Activated CD8-positive, alpha-beta memory T cell treated with anti-CD3 and anti-CD28 coated beads, Interleukin-2, amount 10 ng/mL, durations not matched to agents 7 days and 5 days (primary cell): ENCODE measurements at regions of chr3 and their contacts with region 1.

Region 1: DNA sequence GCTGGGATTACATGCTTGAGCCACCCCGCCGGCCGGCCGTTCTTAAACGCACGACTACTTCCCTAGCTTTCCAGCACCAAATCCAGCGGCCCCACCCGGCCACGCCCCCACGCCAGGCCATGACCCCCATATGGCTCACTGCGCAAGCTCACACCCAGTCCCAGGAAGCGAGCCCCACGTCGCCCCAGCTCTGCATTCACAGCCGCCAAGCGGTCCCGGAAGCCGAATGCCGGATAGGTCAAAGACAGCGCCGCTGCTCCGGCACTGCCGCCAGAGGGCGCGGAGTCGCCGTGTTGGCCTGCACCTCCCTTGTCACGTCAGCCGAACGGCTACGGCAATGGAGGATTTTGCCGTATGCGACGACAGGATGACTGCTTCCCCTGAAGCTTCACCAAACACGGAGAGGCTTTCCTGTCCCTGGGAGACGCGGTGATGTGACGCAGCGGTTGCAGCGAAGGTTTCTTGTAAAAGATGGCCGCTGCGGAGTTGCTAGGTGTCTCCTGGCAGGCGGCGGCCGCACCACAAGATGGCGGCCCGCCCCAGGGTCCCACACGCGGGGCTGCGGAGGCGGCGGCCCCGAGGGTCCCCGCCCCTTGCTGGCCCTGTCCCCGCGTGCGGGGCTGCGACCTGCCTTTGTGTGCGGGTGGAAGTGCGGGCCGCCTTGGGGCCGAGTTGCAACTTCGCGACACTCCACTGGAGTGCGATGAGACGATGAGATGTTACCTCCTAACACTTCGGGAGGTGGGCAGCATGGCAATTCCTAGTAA is 30.2 kb upstream of the RPN1 start:
- DNase-seq: peak; percentile 95
- ATAC-seq: peak; percentile 98
- H3K4me3 Mint-ChIP-seq: peak overlapping the region; percentile 79
- H3K27ac Mint-ChIP-seq: peak overlapping the region; percentile 93
- H3K4me1 Mint-ChIP-seq: peaks cover 13% of the 10 kb centered on the region
- H3K27me3 Mint-ChIP-seq: peaks cover 2% of the 10 kb centered on the region

Region 2: GRCh38 chr3:128584412-128585020 is 96.3 kb before region 1 on chr3:
- CTCF ChIA-PET with region 1: no interaction called
- DNase-seq: peak; percentile 57
- ATAC-seq: peak; percentile 79
- H3K4me3 Mint-ChIP-seq: no peak overlapping the region
- H3K27ac Mint-ChIP-seq: no peak overlapping the region
- H3K4me1 Mint-ChIP-seq: peaks cover 9% of the 10 kb centered on the region
- H3K27me3 Mint-ChIP-seq: peaks cover 18% of the 10 kb centered on the region

Region 3: DNA sequence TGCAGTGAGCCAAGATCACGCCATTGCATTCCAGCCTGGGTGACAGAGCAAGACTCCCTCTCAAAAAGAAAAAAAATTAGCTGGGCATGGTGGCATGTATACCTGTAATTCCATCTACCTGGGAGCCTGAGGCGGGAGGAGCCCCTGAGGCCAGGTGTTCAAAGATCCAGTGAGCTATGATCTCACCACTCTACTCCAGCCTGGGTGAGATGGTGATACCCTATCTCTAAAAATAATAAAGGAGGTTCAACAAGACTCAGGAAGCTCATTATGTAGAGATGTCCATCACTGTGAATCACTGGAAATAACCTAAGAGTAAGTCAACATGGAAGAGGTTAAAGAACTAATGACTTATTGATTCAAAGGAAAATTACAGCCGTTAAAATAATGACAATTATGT is 25.4 kb after region 1 on chr3:
- CTCF ChIA-PET with region 1: interaction called, 10 read pairs
- DNase-seq: no peak
- ATAC-seq: no peak
- H3K4me3 Mint-ChIP-seq: no peak overlapping the region
- H3K27ac Mint-ChIP-seq: no peak overlapping the region
- H3K4me1 Mint-ChIP-seq: no peaks in the 10 kb centered on the region
- H3K27me3 Mint-ChIP-seq: no peaks in the 10 kb centered on the region

Region 4: DNA sequence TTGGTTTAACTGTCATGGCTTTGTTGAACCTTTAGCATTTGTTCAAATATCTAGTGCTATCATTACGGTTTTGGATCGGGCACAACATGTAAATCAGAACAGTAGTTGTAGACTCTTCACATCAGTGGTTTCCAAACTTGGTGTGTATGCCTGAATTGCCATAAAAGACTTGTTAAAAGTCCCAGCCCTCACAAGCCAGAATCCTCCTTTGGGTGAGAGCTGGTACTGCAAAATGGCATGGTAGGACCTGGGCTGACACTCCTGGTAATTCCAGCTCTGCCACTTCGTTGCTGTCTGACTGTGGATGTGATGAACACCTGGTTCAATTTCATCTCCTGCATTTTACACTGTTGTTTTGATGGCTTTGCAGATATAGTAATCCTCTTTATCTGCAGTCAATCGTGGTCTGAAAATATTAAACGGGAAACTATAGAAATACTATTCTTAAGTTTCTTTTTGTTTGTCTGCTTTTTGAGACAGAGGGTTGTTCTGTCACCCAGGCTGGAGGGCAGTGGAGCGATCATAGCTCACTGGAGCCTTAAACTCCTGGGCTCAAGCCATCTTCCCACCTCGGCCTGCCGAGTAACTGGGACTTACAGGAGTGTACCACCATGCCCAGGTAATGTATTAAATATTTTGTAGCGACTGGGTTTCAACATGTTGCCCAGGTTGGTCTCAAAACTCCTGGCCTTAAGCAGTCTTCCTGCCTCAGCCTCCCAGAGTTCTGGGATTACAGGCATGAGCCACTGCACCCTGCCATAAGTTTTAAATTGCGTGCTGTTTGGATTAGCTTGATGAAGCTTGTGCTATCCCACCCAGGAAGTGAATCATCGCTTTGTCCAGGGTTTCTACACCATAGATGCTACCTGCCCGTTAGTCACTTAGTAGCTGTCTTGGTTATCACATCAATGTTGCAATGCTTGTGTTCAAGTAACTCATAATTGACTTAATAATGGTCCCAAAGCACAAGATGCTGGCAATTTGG is 106.8 kb after region 1 on chr3:
- CTCF ChIA-PET with region 1: interaction called, 15 read pairs
- DNase-seq: peak; percentile 69
- ATAC-seq: peak; percentile 67
- H3K4me3 Mint-ChIP-seq: peak overlapping the region; percentile 70
- H3K27ac Mint-ChIP-seq: peak overlapping the region; percentile 92
- H3K4me1 Mint-ChIP-seq: peaks cover 66% of the 10 kb centered on the region
- H3K27me3 Mint-ChIP-seq: no peaks in the 10 kb centered on the region

Region 5: GRCh38 chr3:128794770-128795649 is 114.2 kb after region 1 on chr3:
- CTCF ChIA-PET with region 1: interaction called, 34 read pairs
- DNase-seq: peak; percentile 80
- ATAC-seq: peak; percentile 89
- H3K4me3 Mint-ChIP-seq: no peak overlapping the region
- H3K27ac Mint-ChIP-seq: peak overlapping the region; percentile 74
- H3K4me1 Mint-ChIP-seq: peaks cover 69% of the 10 kb centered on the region
- H3K27me3 Mint-ChIP-seq: no peaks in the 10 kb centered on the region

Region 6: GRCh38 chr3:128804017-128804810 is 123.4 kb after region 1 on chr3:
- CTCF ChIA-PET with region 1: interaction called, 27 read pairs
- DNase-seq: peak; percentile 84
- ATAC-seq: peak; percentile 88
- H3K4me3 Mint-ChIP-seq: peak overlapping the region; percentile 69
- H3K27ac Mint-ChIP-seq: peak overlapping the region; percentile 84
- H3K4me1 Mint-ChIP-seq: peaks cover 71% of the 10 kb centered on the region
- H3K27me3 Mint-ChIP-seq: no peaks in the 10 kb centered on the region

Region 7: DNA sequence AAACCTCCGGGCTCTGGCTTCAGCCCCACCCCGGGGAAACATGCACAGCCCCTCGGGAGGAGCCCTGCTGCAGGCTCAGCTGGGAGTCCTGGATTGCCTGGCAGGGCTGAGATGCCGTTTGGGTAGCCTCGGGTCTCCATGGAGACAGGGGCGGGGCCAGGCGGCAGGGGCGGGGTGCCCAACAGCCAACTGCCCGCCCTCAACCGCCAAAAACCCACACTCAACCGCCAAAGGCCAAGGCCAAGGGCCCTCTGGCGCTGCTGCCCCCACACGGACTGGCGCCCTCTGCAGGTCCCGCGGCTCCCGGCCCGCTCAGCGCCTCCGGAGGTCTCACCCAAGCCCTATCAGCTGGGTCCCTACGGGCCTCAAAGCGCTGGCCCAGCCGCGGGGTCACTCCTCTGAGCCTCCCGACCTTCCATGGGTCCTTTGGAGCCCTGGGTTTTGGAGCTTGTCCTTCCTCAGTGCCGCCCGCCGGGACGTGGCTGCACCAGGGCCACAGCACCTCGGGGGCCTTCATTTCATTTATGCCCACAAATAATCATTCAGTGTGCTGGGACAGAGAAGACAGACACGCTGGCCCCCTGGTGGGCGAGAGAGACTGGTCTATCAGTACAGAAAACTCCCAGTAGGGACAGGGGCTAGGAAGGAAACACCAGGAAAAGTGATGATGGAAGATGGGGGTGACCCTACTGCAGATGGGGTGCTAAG is 165.1 kb after region 1 on chr3:
- CTCF ChIA-PET with region 1: interaction called, 25 read pairs
- DNase-seq: peak; percentile 91
- ATAC-seq: peak; percentile 81
- H3K4me3 Mint-ChIP-seq: peak overlapping the region; percentile 59
- H3K27ac Mint-ChIP-seq: peak overlapping the region; percentile 80
- H3K4me1 Mint-ChIP-seq: peaks cover 13% of the 10 kb centered on the region
- H3K27me3 Mint-ChIP-seq: no peaks in the 10 kb centered on the region

Region 8: DNA sequence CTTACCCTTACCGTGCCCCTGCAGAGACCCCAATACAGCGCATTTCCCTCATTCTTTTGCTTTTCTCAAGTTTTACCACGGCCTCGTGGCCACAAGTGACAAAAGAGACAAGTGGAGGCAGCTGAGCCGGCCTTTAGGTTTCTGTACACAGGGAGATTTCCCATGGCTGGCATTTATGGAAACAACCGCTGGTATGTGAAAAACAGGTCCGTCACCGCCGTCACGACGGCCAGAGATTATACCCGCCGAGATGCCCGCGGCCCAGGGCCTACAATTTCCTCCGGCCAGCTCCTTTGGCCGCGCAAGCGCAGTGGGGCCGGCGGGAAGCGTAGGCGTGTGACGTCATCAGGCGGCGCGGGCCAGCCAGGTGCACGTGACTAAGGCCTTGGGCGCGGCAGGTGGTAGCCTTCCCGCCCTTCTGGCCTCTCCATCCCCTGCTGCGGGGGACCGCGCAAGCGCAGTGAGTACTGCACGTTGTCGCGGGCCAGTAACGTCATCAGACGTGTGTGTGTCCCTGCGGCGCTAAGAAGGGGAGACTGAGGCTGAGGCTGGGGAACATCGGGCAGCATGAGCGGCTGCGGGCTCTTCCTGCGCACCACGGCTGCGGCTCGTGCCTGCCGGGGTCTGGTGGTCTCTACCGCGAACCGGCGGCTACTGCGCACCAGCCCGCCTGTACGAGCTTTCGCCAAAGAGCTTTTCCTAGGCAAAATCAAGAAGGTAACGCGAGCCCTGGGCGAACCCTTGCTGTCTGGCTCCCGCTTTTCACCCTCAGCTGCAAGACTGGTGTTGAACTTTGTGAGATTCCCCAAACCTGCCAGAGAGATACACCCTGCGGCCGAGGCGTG is 198.6 kb after region 1 on chr3 and contains the start of gene ACAD9:
- CTCF ChIA-PET with region 1: interaction called, 10 read pairs
- DNase-seq: peak; percentile 98
- ATAC-seq: peak; percentile 97
- H3K4me3 Mint-ChIP-seq: peak within 1 kb of the TSS; percentile 86
- H3K27ac Mint-ChIP-seq: peak within 1 kb of the TSS; percentile 95
- H3K4me1 Mint-ChIP-seq: peaks cover 64% of the 10 kb centered on the region
- H3K27me3 Mint-ChIP-seq: peaks cover 3% of the 10 kb centered on the region
- total RNA-seq, gene ACAD9: 61.2 to 68.2 TPM